ENCODE measurements at regions of chr1 and their contacts with region 1.

Region 1: DNA sequence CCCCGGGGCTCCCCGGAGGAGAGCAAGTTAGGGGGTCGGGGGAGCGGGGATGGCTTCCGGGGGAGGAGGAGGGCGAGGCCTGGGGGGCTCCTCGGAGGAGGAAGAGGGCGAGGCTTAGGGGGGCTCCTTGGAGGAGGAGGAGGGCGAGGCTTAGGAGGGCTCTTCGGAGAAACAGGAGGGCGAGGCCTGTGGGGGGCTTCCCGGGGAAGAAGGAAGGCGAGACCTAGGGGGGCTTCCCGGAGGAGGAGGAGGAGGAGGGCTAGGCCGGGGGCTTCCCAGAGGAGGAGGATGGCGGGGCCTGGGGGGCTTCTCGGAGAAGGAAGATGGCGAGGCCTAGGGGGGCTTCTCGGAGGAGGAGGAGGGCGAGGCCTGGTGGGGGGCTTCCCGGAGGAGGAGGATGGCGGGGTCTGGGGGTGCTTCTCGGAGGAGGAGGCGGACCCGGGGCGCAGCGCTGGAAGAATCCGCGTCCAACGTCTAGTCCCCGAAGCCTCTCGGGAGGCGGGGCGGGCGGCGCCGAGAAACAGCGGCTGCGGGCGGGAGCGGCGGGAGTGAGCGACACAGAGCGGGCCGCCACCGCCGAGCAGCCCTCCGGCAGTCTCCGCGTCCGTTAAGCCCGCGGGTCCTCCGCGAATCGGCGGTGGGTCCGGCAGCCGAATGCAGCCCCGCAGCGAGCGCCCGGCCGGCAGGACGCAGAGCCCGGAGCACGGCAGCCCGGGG is at the start of gene KLHL17:
- DNase-seq: peak; percentile 84
- ATAC-seq: peak; percentile 46 to 69
- total RNA-seq, gene KLHL17: 5.7 to 8.2 TPM

Region 2: DNA sequence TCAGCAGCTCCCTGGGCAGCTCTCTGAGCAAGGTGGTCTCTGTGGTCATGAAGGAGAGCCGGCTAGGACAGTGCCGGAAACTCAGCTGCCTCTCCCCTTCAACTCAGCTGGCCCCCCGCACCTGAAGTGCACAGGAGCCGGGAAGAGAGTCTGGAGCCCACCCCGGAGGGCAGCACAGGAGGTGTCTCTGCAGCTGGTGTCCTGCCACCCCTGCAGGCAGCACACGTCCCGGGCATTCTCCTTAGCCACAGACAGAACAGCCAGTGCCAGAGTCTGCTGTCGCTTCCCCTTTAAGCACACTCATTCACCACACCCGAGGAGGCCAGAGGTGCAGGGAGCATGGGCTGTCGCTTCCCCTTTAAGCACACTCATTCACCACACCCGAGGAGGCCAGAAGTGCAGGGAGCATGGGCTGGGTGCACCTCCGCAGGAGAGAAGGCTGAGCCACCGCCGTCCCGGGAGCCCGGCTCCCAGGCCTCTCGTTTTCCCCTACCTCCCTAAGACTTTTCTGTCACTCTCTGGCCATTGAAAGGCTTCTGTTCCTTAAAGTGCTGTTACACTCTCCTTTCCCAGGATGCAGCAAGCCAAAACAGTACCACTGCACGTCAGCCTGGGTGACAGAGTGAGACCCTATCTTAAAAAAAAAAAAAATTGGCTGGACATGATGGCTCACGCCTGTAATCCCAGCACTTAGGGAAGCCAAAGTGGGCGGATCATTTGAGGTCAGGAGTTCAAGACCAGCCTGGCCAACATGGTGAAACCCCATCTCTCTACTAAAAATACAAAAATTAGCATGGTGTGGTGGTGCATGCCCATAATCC is 53.4 kb before region 1 on chr1:
- intact Hi-C with region 1: loop called in 1 of 2 experiments (anchors 2 kb)
- DNase-seq: peak; percentile 43
- ATAC-seq: peak; percentile 8 to 9

Region 3: DNA sequence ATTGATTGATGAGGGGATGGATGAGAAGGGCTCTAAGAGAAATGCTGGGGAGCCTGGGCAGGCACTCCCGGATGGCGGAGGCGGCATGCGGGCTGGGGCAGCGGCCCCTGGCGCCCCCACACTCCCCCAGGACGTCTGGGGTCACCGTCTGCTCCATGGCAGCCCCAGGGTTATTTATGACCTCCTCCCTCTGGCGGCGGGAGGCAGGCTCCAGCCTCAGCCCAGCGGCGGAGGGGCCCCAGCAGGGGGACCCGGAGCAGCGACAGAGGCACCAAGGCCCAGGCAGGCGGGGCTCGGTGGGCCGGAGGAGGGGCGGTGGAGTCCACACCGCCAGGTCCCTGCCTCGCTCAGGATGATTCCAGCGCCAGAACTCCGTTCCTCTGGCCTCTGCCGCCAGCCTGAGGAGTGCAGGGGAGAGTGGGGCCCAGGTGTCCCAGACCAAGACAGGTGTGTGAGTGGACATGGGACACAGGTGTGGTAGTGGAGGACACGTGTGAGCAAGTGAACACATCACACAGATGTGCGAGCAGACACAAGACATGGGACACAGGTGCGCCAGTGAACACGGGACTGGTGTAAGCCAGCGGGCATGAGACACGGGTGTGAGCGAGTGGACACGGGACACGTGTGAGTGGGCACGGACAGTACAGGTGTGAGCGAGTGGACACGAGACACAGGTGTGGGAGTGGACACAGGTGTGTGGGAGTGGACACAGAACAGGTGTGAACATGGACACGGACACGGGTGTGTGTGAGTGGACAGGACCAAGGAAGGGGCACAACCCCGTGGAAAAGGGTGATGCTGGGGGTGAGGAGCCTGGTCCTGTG is 39.0 kb before region 1 on chr1:
- intact Hi-C with region 1: no loop called
- DNase-seq: peak; percentile 75
- ATAC-seq: peak; percentile 65 to 73

Region 4: GRCh38 chr1:938088-938683 is 22.0 kb before region 1 on chr1:
- intact Hi-C with region 1: no loop called
- DNase-seq: no peak
- ATAC-seq: peak in 1 of 2 donors; percentile 6

Region 5: DNA sequence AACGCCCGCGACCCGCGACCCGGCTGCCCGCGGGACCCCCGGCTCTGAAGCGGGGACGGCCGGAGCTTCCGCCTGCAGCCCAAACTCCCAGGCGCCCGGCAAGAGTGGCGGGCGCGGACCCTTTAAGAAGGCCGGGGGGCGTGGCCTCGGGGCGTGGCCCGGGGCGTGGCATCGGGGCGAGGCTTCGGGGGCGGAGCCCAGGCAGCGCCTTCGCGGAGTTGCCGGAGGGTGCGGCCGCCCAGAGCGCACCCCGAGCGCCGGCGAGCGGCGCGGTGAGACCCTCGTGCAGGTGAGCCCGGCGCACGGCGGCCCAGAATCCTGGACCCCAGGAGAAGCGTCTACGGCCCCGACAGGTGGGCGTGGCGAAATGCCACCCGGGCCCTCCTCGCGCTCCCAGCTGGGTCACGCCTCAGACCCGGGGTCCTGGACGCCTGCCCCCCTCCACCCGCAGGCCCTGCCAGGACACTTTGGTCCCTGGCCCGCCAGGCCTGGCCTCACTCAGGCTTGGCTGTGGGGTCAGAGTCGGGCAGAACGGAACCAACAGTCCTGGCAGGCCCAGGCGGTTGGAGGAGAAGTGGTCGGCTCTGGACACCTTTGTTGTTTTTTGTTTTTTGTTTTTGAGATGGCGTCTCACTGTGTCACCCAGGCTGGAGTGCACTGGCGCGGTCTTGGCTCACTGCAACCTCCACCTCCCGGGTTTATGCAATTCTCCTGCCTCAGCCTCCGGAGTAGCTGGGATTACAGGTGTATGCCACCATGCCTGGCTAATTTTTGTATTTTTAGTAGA is 99.5 kb after region 1 on chr1:
- intact Hi-C with region 1: no loop called
- DNase-seq: peak; percentile 90
- ATAC-seq: peak; percentile 92 to 93

Measured in left cardiac atrium (tissue), 4 donors.